Caco-2 (cell line): ENCODE measurements at regions of chr5 and their contacts with region 1.

Region 1: GRCh38 chr5:56088967-56089829 is 94.4 kb upstream of the IL6ST start:
- DNase-seq: peak; percentile 83 to 87
- H3K4me3 ChIP-seq: no peak overlapping the region
- H3K4me3 Mint-ChIP-seq: peak overlapping the region; percentile 65
- H3K27ac Mint-ChIP-seq: peak overlapping the region; percentile 83
- H3K4me1 ChIP-seq: peaks cover 55% of the 10 kb centered on the region
- H3K4me1 Mint-ChIP-seq: peaks cover 33% of the 10 kb centered on the region
- H3K27me3 ChIP-seq: no peaks in the 10 kb centered on the region
- H3K27me3 Mint-ChIP-seq: no peaks in the 10 kb centered on the region
- CTCF ChIP-seq: no peak

Region 2: GRCh38 chr5:55994574-55995333 is 94.4 kb before region 1 on chr5 and contains the start of gene IL6ST:
- CTCF ChIA-PET with region 1: no interaction called
- POLR2A ChIA-PET with region 1: no interaction called
- intact Hi-C with region 1: no loop called
- DNase-seq: peak; percentile 98 to 99
- H3K4me3 ChIP-seq: peak within 1 kb of the TSS; percentile 97
- H3K4me3 Mint-ChIP-seq: peak within 1 kb of the TSS; percentile 86
- H3K27ac Mint-ChIP-seq: peak within 1 kb of the TSS; percentile 85
- H3K4me1 ChIP-seq: peaks cover 57% of the 10 kb centered on the region
- H3K4me1 Mint-ChIP-seq: peaks cover 48% of the 10 kb centered on the region
- H3K27me3 ChIP-seq: no peaks in the 10 kb centered on the region
- H3K27me3 Mint-ChIP-seq: no peaks in the 10 kb centered on the region
- CTCF ChIP-seq: no peak
- total RNA-seq, gene IL6ST: 265 and 278 TPM in 2 replicates

Region 3: DNA sequence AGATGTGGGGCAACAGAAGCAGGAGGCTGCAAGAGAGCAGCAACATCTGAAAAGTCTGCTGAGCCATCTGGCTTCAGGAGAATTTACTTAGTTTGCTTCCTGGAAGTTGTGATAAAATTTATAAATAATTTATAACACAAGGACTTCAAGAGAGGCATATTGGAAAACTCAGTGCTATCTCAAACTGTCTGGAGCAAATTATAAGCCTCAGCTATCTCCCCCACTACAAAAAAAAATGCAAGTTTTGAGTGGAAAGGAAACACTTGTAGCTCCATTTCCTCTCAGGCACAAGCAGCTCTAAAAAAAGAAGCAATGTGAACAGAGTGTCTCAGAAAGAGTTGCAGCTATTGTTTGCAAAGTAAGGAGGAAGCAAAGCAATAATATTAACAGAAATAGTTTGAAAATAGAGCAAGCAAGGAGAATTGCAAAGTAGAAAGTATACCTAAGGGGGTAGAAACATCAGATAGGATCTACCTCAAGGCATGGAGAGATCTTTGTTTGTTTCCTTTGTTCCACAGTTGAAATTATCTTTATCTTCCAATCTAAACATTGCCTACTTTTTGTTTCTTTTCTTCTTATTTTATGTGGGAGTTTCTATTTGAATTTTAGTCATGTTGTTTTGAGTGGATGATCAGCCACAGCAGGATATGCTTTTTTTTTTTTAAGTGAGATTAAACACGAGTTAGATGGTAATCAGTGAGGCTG is 38.5 kb before region 1 on chr5:
- CTCF ChIA-PET with region 1: no interaction called
- POLR2A ChIA-PET with region 1: no interaction called
- intact Hi-C with region 1: no loop called
- DNase-seq: no peak
- H3K4me3 ChIP-seq: no peak overlapping the region
- H3K4me3 Mint-ChIP-seq: no peak overlapping the region
- H3K27ac Mint-ChIP-seq: no peak overlapping the region
- H3K4me1 ChIP-seq: peaks cover 38% of the 10 kb centered on the region
- H3K4me1 Mint-ChIP-seq: peaks cover 24% of the 10 kb centered on the region
- H3K27me3 ChIP-seq: no peaks in the 10 kb centered on the region
- H3K27me3 Mint-ChIP-seq: no peaks in the 10 kb centered on the region
- CTCF ChIP-seq: no peak

Region 4: GRCh38 chr5:56070851-56071465 is 18.2 kb before region 1 on chr5:
- CTCF ChIA-PET with region 1: interaction called, 3 read pairs
- POLR2A ChIA-PET with region 1: no interaction called
- intact Hi-C with region 1: loop called (anchors 2 kb)
- DNase-seq: no peak
- H3K4me3 ChIP-seq: no peak overlapping the region
- H3K4me3 Mint-ChIP-seq: no peak overlapping the region
- H3K27ac Mint-ChIP-seq: peak overlapping the region; percentile 30
- H3K4me1 ChIP-seq: peaks cover 56% of the 10 kb centered on the region
- H3K4me1 Mint-ChIP-seq: peaks cover 34% of the 10 kb centered on the region
- H3K27me3 ChIP-seq: no peaks in the 10 kb centered on the region
- H3K27me3 Mint-ChIP-seq: no peaks in the 10 kb centered on the region
- CTCF ChIP-seq: no peak

Region 5: DNA sequence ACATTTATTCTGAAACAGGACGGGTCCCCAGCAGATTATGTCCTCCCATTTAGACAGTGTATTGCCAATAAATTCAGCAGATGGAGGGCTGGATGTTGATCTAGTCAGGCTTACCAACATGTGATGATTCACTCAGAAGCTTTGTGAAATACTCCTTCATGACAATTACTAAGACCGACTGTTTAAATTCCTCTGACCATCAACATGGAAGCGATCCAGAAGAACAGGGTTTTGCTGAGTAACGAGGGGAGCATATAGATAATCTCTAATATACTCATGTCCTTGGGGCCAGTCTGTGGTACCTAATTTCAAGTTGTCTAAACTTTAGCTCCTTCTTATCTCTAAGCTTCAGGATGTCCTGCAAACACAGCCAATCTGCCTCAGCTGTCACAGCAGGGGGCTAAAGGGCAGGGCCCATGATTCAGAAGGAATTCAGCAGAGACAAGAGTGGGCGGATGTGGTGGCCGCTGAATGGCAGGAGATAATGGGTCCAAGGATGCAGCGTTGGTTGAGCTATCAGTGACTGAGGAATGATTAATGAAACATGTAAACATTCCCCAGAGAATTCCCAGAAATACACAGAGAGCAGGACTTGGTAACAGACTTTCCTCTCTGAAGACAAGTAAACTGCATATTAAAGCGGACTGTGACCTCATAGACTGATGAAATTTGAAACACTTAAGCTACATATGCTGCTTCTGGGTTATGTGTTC is 34.5 kb after region 1 on chr5:
- CTCF ChIA-PET with region 1: no interaction called
- POLR2A ChIA-PET with region 1: interaction called, 5 read pairs
- intact Hi-C with region 1: loop called (anchors 1 kb)
- DNase-seq: peak; percentile 94 to 98
- H3K4me3 ChIP-seq: no peak overlapping the region
- H3K4me3 Mint-ChIP-seq: peak overlapping the region; percentile 65
- H3K27ac Mint-ChIP-seq: peak overlapping the region; percentile 99
- H3K4me1 ChIP-seq: peaks cover 46% of the 10 kb centered on the region
- H3K4me1 Mint-ChIP-seq: peaks cover 32% of the 10 kb centered on the region
- H3K27me3 ChIP-seq: no peaks in the 10 kb centered on the region
- H3K27me3 Mint-ChIP-seq: no peaks in the 10 kb centered on the region
- CTCF ChIP-seq: no peak

Region 6: GRCh38 chr5:56155992-56156584 is 66.9 kb after region 1 on chr5:
- CTCF ChIA-PET with region 1: no interaction called
- POLR2A ChIA-PET with region 1: no interaction called
- intact Hi-C with region 1: loop called (anchors 1 kb)
- DNase-seq: no peak
- H3K4me3 ChIP-seq: no peak overlapping the region
- H3K4me3 Mint-ChIP-seq: no peak overlapping the region
- H3K27ac Mint-ChIP-seq: peak overlapping the region; percentile 90
- H3K4me1 ChIP-seq: peaks cover 69% of the 10 kb centered on the region
- H3K4me1 Mint-ChIP-seq: peaks cover 36% of the 10 kb centered on the region
- H3K27me3 ChIP-seq: no peaks in the 10 kb centered on the region
- H3K27me3 Mint-ChIP-seq: no peaks in the 10 kb centered on the region
- CTCF ChIP-seq: no peak